ENCODE measurements at regions of chr1 and their contacts with region 1.

Region 1: GRCh38 chr1:28581536-28582247 is 10.4 kb upstream of the RAB42 start:
- DNase-seq: peak; percentile 84 to 95 (median 90)
- ATAC-seq: peak; percentile 88
- H3K4me3 Mint-ChIP-seq: peak overlapping the region; percentile 93 to 99 (median 96)
- H3K27ac Mint-ChIP-seq: peak overlapping the region; percentile 87 to 97 (median 96)
- H3K4me1 Mint-ChIP-seq: peaks cover 16 to 50% (median 42%) of the 10 kb centered on the region in 4 donors
- H3K27me3 Mint-ChIP-seq: no peaks in the 10 kb centered on the region

Region 2: GRCh38 chr1:28329395-28330153 is 252.1 kb before region 1 on chr1:
- POLR2A ChIA-PET with region 1: interaction called, 18 read pairs
- DNase-seq: peak in 1 of 10 donors; percentile 21
- ATAC-seq: peak; percentile 9 to 14
- H3K4me3 Mint-ChIP-seq: peak overlapping the region; percentile 89 to 98 (median 94)
- H3K27ac Mint-ChIP-seq: peak overlapping the region; percentile 94 to 99 (median 98)
- H3K4me1 Mint-ChIP-seq: peaks cover 17 to 54% (median 42%) of the 10 kb centered on the region in 4 donors
- H3K27me3 Mint-ChIP-seq: peaks cover 0 to 4% (median 0%) of the 10 kb centered on the region in 5 donors

Region 3: DNA sequence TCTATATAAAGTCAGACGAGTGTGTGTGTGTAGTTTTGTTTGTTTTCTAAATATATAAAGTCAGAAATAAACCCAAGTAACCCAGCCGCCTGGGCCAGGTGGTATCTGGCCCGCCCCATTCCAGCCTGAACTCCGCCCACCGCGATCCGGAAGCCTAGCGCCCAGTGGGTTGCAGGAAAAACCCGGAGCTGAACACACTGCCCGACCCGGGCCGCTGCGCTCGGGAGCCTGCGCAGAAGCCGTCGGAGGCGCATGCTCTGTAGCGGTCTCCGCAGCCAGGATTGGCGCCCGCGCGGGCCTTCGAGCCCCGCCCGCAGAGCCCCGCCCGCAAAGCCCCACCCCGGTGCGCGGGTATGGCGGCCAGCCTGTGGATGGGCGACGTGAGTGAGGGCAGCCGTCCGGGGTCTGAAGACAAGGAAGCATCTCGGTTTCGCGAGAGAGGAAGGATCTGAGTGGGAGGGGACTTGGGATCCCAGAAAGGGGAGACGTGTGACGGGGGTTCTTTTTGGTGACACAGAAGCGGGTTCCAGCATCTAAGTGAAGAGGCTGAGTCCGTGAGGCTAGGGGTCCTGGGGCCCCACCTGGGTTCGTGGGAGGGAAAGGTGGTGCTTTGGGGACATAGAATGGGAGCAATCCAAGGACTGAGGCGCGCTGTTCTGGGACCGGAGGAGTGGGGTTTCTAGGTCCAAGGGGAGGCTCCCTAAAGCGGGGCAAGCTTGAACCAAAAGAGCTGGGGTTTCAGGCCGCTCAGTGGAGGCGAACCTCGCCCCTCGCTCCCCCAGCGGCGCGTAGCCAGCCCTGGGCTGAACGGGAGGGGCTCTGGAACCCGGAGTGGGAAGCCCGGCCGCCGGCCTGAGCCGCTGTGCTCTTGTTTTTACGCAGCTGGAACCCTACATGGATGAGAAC is 28.7 kb before region 1 on chr1 and contains the start of gene TRNAU1AP:
- POLR2A ChIA-PET with region 1: interaction called, 113 read pairs
- DNase-seq: peak; percentile 94 to 98 (median 96)
- ATAC-seq: peak; percentile 89 to 91
- H3K4me3 Mint-ChIP-seq: peak within 1 kb of the TSS; percentile 96 to 100 (median 98)
- H3K27ac Mint-ChIP-seq: peak within 1 kb of the TSS; percentile 94 to 99 (median 98)
- H3K4me1 Mint-ChIP-seq: peaks cover 9 to 30% (median 21%) of the 10 kb centered on the region in 4 donors
- H3K27me3 Mint-ChIP-seq: no peaks in the 10 kb centered on the region
- polyA plus RNA-seq, gene TRNAU1AP: 21.5 to 25.3 (median 22.6) TPM

Region 4: GRCh38 chr1:28648474-28649198 is 66.9 kb after region 1 on chr1 and contains the start of gene RNU11:
- POLR2A ChIA-PET with region 1: interaction called, 50 read pairs
- DNase-seq: peak; percentile 57 to 99 (median 88)
- ATAC-seq: peak; percentile 78 to 80
- H3K4me3 Mint-ChIP-seq: peak within 1 kb of the TSS; percentile 78 to 97 (median 91)
- H3K27ac Mint-ChIP-seq: peak within 1 kb of the TSS; percentile 98 to 100 (median 99)
- H3K4me1 Mint-ChIP-seq: peaks cover 16 to 38% (median 32%) of the 10 kb centered on the region in 4 donors
- H3K27me3 Mint-ChIP-seq: no peaks in the 10 kb centered on the region
- polyA plus RNA-seq, gene RNU11: not detected

Region 5: DNA sequence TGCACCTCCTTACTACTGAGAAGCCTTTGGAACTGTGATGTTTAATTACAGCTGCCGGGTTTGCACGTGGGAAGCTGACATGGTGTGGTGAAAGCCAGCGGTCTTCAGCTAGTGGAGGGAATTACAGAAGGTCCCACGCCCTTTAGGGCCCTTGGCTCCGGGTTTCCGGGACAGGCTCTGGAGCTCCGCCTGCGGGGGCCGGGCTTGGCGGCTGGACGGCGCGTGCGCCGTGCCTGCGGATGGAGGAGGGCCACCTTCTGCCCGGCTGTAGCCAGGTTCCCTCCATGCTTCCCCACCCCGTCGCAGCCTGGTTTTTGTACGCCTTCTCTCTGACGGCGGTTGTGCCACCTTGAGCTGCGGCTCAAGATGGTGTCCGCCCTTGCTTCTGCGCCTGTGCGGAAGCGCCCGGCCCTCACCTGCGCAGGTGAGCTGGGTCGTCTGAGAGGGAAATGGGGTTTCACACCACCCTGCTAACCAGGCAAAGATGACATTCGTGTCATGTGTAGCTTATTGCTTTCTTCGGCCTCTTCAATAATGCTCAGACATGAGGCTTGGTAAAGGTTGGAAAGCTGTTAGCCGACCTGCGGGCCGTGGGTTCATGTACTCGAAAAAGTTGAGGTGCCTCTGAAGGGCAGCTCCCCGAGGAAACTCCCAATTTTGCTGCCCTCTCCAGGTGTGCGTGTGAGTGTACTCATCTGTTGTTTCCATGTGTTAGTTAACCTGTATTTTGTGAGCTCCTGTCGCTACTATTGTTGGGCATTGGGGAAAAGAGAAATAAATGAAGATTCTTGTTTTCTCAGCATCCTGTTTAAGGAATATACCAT is 193.6 kb after region 1 on chr1:
- POLR2A ChIA-PET with region 1: interaction called, 12 read pairs
- DNase-seq: peak; percentile 55 to 82 (median 72)
- ATAC-seq: peak; percentile 92 to 95
- H3K4me3 Mint-ChIP-seq: peak overlapping the region; percentile 76 to 89 (median 83)
- H3K27ac Mint-ChIP-seq: peak overlapping the region; percentile 64 to 94 (median 89)
- H3K4me1 Mint-ChIP-seq: peaks cover 0 to 15% (median 7%) of the 10 kb centered on the region in 4 donors
- H3K27me3 Mint-ChIP-seq: no peaks in the 10 kb centered on the region